HCT116 (cell line): ENCODE measurements at regions of chr17 and their contacts with region 1.

Region 1: GRCh38 chr17:20797292-20797691 is 217.8 kb downstream of the CDRT15L2 start:
- DNase-seq: no peak
- ATAC-seq: no peak
- H3K4me3 ChIP-seq: no peak overlapping the region
- H3K27ac ChIP-seq: no peak overlapping the region
- H3K4me1 ChIP-seq: peaks cover 0 to 7% of the 10 kb centered on the region in 2 experiments; a peak in 1 of 4 replicates
- H3K27me3 ChIP-seq: no peaks in the 10 kb centered on the region
- CTCF ChIP-seq: no peak
- POLR2A ChIP-seq: no peak
- RAD21 ChIP-seq: no peak

Region 2: GRCh38 chr17:20273741-20274500 is 523.4 kb before region 1 on chr17:
- CTCF ChIA-PET with region 1: no interaction called
- POLR2A ChIA-PET with region 1: no interaction called
- RAD21 ChIA-PET with region 1: no interaction called
- intact Hi-C with region 1: no loop called
- DNase-seq: no peak
- ATAC-seq: no peak
- H3K4me3 ChIP-seq: no peak overlapping the region
- H3K27ac ChIP-seq: no peak overlapping the region
- H3K4me1 ChIP-seq: peaks cover 0 to 5% of the 10 kb centered on the region in 2 experiments; a peak in 1 of 4 replicates
- H3K27me3 ChIP-seq: no peaks in the 10 kb centered on the region
- CTCF ChIP-seq: no peak
- POLR2A ChIP-seq: no peak
- RAD21 ChIP-seq: no peak

Region 3: DNA sequence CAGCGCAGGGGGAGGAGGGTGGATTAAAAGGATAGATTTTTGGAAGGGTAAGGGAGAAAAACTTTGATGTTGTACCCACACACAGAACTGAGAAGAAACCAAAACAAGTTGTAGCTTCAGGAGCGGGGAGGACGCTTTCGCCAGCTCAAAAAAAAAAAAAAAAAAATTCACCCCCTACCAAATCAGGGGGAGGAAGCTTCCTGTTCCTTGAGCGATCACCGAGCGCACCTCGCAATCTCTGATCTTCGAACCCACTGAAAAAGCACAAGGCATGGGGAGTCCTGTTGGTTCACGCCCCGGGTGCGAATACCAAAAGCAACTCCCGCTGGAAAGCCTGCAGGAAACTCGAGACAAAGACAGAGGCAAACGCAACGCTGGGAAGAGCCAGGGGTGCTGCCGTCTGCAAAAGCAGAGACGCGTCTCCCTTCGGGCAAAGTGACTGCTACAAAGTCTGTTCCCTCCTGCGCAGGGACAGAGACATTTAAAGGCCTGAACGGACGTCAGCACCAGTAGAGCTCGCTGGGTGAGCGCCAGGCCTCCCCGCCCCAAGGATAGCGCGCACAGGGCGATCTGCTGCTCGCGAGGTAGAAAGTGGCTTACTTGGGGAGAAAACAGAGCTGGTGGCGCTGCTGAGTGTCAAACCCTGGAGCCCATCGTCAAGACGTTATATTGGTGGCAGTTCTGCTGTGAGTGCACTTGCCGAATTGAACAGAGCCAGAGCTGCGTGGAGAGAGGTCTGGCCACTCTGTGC is 55.1 kb after region 1 on chr17:
- CTCF ChIA-PET with region 1: interaction called, 4 read pairs
- POLR2A ChIA-PET with region 1: no interaction called
- RAD21 ChIA-PET with region 1: no interaction called
- intact Hi-C with region 1: loop called (anchors 2 kb)
- DNase-seq: no peak
- ATAC-seq: peak; percentile 44
- H3K4me3 ChIP-seq: no peak overlapping the region
- H3K27ac ChIP-seq: no peak overlapping the region
- H3K4me1 ChIP-seq: no peaks in the 10 kb centered on the region
- H3K27me3 ChIP-seq: no peaks in the 10 kb centered on the region
- CTCF ChIP-seq: no peak
- POLR2A ChIP-seq: no peak
- RAD21 ChIP-seq: no peak

Region 4: GRCh38 chr17:20992987-20993862 is 195.9 kb after region 1 on chr17:
- CTCF ChIA-PET with region 1: interaction called, 17 read pairs
- POLR2A ChIA-PET with region 1: no interaction called
- RAD21 ChIA-PET with region 1: interaction called in 1 of 2 experiments, 3 read pairs
- intact Hi-C with region 1: loop called (anchors 5 kb)
- DNase-seq: peak; percentile 51
- ATAC-seq: peak; percentile 81
- H3K4me3 ChIP-seq: no peak overlapping the region
- H3K27ac ChIP-seq: no peak overlapping the region; the same call in 1 of the 2 replicates
- H3K4me1 ChIP-seq: peaks cover 6 to 9% of the 10 kb centered on the region in 2 experiments; a peak in 3 of 4 replicates
- H3K27me3 ChIP-seq: no peaks in the 10 kb centered on the region
- CTCF ChIP-seq: peak; percentile 73 to 97 (median 94)
- POLR2A ChIP-seq: no peak
- RAD21 ChIP-seq: peak; percentile 73

Region 5: DNA sequence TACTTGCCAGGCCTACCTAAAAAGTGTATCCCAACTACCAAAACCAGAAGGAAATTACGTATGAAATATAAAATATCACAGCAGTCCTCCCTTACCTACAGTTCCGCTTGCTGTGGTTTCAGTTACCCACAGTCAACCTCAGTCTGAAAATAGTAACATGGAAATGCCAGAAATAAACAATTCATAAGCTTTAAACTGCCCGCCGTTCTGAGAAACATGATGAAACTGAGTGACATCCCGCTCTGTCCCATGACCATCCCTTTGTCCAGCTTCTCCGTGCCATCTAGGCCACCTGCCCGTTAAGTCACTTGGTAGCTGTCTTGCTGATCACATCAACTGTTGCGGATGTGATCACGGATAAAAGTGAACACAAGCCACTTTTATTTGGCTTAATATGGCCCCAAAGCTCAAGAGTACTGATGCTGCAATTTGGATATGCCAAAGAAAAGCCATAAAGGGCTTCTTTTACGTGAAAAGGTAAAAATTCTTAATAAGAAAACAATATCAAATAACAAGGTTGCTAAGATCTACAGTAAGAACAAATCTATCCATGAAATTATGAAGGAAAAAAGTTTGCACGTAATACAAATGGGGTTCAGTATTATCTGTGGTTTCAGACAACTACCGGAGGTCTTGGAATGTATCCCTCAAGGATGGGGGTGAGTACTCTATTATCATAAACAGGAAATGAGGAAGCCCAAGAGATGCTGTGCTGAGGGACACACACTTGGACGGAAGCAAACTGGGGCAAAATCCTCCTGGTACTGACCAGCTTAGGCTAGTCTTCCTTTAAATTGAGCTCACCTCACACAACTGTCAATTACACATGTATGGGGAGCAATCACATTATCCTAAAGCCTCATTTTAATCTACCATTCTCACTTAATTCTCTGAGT is 237.3 kb after region 1 on chr17:
- CTCF ChIA-PET with region 1: no interaction called
- POLR2A ChIA-PET with region 1: no interaction called
- RAD21 ChIA-PET with region 1: no interaction called
- intact Hi-C with region 1: no loop called
- DNase-seq: no peak
- ATAC-seq: no peak
- H3K4me3 ChIP-seq: no peak overlapping the region
- H3K27ac ChIP-seq: no peak overlapping the region
- H3K4me1 ChIP-seq: peaks cover under 1 to 3% of the 10 kb centered on the region in 2 experiments
- H3K27me3 ChIP-seq: no peaks in the 10 kb centered on the region
- CTCF ChIP-seq: no peak
- POLR2A ChIP-seq: no peak
- RAD21 ChIP-seq: no peak